Activated CD4-positive, alpha-beta T cell treated with anti-CD3 and anti-CD28 coated beads, Interleukin-2, amount 10 ng/mL, durations not matched to agents 24 days and 14 days (primary cell): ENCODE measurements at regions of chr5 and their contacts with region 1.

Region 1: GRCh38 chr5:134370871-134371833 is at the start of gene UBE2B:
- DNase-seq: peak; percentile 98
- H3K4me3 Mint-ChIP-seq: peak within 1 kb of the TSS; percentile 93
- H3K27ac Mint-ChIP-seq: peak within 1 kb of the TSS; percentile 93
- H3K4me1 Mint-ChIP-seq: peaks cover 42% of the 10 kb centered on the region
- H3K27me3 Mint-ChIP-seq: peaks cover 3% of the 10 kb centered on the region
- total RNA-seq, gene UBE2B: 108 and 109 TPM in 2 replicates

Region 2: DNA sequence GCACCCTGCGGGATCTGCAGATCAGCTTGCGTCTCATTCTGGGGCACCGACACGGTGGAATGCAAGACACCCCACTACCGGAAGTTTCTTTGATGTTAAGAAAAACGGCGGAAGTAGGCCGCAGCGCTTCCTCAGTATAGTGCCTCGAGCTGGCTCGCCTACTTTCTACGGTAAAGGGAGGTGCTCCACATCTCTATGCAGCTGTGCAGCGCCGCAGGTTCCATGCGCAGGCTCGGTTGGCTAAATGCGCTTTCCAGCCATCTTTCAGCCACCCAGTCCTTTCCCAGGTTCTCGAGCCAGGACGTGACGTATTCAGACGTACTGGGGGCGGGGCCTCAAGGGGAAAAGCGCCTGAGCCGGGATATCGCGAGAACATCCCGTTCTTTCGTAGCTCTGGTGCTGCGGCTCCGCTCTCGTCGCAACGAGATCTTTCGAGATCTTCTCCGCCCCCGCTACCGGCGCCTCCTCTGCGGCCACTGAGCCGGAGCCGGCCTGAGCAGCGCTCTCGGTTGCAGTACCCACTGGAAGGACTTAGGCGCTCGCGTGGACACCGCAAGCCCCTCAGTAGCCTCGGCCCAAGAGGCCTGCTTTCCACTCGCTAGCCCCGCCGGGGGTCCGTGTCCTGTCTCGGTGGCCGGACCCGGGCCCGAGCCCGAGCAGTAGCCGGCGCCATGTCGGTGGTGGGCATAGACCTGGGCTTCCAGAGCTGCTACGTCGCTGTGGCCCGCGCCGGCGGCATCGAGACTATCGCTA is 1319.4 kb before region 1 on chr5 and contains the start of gene HSPA4:
- intact Hi-C with region 1: loop called (anchors 5 kb)
- DNase-seq: peak; percentile 99
- H3K4me3 Mint-ChIP-seq: peak within 1 kb of the TSS; percentile 89
- H3K27ac Mint-ChIP-seq: peak within 1 kb of the TSS; percentile 99
- H3K4me1 Mint-ChIP-seq: peaks cover 25% of the 10 kb centered on the region
- H3K27me3 Mint-ChIP-seq: peaks cover 2% of the 10 kb centered on the region
- total RNA-seq, gene HSPA4: 267 and 270 TPM in 2 replicates

Region 3: GRCh38 chr5:134398609-134399155 is 27.5 kb after region 1 on chr5:
- intact Hi-C with region 1: no loop called
- DNase-seq: no peak
- H3K4me3 Mint-ChIP-seq: no peak overlapping the region
- H3K27ac Mint-ChIP-seq: peak overlapping the region; percentile 13
- H3K4me1 Mint-ChIP-seq: peaks cover 2% of the 10 kb centered on the region
- H3K27me3 Mint-ChIP-seq: no peaks in the 10 kb centered on the region

Region 4: DNA sequence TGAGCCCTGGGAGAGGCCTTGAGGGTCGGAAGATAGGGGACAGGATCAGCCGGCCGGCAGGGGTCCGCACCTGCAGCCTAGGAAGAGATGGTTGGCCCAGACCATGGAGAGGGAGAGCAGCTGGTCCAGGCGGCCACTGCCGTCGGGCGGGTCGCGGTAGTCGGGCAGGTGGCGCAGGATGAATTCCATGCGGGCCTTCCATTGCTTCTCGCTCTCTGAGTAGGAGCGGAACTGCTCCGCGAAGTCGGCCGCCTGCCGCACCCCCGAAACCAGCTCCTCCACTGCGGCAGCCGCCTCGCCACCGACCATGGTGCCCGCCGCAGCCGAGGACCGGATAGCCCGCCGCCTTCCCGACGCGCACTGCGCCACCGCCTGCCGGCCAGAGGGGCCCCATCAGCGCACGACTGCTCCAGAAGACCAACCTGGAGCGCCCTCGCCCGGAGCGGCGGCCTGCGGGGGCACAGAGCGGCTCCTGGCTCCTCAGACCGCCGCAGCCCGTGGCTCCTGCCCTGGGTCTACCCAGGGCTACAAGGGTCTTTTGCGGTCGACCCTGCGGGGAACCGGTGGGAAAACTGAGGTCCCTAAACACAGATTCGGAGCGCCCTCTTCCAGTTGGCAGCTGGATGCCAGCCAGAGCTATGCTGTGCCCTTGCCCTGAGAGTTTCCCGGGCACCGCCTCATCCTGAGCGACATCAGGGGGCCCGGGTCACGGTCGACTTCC is 40.6 kb after region 1 on chr5 and contains the start of gene CDKN2AIPNL:
- intact Hi-C with region 1: loop called (anchors 2 kb)
- DNase-seq: peak; percentile 97
- H3K4me3 Mint-ChIP-seq: peak within 1 kb of the TSS; percentile 98
- H3K27ac Mint-ChIP-seq: peak within 1 kb of the TSS; percentile 92
- H3K4me1 Mint-ChIP-seq: peaks cover 24% of the 10 kb centered on the region
- H3K27me3 Mint-ChIP-seq: no peaks in the 10 kb centered on the region
- total RNA-seq, gene CDKN2AIPNL: 32.0 and 34.3 TPM in 2 replicates

Region 5: DNA sequence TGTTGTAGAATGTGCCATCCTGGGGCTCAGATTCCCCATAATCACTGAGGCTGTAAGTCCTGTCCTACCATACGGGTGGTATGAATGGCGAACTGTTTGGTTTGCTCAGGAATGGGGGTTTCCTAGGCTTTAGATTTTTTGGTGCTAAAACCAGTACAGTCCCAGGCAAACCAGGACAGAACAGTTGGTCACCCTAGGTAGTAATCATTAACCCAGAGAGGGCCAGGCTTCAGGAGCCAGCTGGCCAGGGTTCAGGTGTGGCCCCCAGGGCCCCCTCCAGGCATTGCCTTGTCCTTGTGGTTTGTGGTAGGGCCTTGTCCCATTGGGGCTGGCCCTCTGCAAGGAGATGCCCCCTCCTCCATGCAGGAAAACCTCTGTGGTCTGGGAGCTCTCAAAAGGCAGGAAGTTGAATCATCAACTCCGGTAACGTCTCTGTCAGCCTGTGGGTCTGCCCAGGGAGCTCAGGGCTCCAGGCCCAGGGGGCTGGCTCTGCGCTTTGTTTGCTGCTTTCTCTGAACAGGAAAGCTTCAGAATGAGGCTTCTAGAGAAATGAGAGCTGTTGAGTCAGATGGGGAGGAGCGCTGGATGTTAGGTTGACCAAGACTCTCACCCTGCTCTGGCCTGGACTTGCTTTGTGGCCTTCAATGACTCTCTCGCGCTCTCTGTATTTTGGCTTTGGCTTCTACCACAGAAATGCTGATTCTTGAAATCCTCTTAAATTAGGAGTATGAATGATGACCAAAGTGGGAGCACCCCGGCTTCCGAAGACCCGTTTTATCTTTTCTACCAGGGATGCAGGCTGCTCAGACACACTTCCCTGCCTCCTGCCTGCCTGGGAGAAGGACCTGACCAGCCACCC is 132.2 kb after region 1 on chr5:
- intact Hi-C with region 1: no loop called
- DNase-seq: peak; percentile 91
- H3K4me3 Mint-ChIP-seq: peak overlapping the region; percentile 65
- H3K27ac Mint-ChIP-seq: peak overlapping the region; percentile 95
- H3K4me1 Mint-ChIP-seq: peaks cover 33% of the 10 kb centered on the region
- H3K27me3 Mint-ChIP-seq: no peaks in the 10 kb centered on the region

Region 6: GRCh38 chr5:134586866-134587524 is 215.8 kb after region 1 on chr5:
- intact Hi-C with region 1: loop called (anchors 10 kb)
- DNase-seq: peak; percentile 95
- H3K4me3 Mint-ChIP-seq: peak overlapping the region; percentile 51
- H3K27ac Mint-ChIP-seq: peak overlapping the region; percentile 84
- H3K4me1 Mint-ChIP-seq: peaks cover 16% of the 10 kb centered on the region
- H3K27me3 Mint-ChIP-seq: no peaks in the 10 kb centered on the region

Region 7: DNA sequence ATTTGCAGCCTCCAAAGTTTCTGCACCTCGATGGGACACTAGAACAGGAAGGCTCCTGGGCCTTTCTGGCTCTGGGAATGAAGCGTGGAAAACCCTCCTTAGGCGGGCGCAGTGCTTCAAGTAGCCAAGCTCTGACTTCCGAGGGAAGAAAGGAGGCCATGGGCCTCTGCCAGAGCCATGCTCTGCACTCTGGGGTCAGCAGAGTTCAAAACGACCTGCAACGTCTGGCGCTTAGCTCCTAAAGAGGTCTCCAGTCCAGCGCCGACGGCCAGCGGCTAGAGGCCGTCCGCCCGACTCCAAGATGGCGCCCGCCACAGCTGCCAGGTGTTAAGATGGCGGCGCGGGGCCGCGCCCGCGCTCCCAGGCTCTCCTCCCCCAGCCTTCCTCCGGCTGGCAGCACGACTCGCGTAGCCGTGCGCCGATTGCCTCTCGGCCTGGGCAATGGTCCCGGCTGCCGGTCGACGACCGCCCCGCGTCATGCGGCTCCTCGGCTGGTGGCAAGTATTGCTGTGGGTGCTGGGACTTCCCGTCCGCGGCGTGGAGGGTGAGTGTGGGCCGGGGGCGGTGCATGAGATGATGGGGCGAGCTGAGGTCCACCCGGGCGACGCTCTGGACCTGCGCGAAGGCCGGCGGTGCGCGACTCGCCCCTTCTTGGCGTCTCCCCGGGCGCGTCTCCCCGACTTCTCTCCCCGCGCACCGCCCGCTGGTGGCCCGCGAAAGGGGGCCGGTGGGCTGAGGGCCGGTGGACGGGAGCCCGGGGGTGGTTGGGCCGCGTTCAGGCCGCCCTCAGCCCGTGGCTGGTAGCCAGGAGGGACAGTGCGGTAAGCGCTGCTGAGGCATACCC is 503.1 kb after region 1 on chr5 and contains the start of gene TXNDC15:
- intact Hi-C with region 1: loop called (anchors 10 kb)
- DNase-seq: peak; percentile 95
- H3K4me3 Mint-ChIP-seq: peak within 1 kb of the TSS; percentile 99
- H3K27ac Mint-ChIP-seq: peak within 1 kb of the TSS; percentile 98
- H3K4me1 Mint-ChIP-seq: peaks cover 30% of the 10 kb centered on the region
- H3K27me3 Mint-ChIP-seq: no peaks in the 10 kb centered on the region
- total RNA-seq, gene TXNDC15: 46.2 and 51.3 TPM in 2 replicates